Activated naive CD4-positive, alpha-beta T cell treated with anti-CD3 and anti-CD28 coated beads for 36 hours (primary cell): ENCODE measurements at regions of chr4 and their contacts with region 1.

Region 1: DNA sequence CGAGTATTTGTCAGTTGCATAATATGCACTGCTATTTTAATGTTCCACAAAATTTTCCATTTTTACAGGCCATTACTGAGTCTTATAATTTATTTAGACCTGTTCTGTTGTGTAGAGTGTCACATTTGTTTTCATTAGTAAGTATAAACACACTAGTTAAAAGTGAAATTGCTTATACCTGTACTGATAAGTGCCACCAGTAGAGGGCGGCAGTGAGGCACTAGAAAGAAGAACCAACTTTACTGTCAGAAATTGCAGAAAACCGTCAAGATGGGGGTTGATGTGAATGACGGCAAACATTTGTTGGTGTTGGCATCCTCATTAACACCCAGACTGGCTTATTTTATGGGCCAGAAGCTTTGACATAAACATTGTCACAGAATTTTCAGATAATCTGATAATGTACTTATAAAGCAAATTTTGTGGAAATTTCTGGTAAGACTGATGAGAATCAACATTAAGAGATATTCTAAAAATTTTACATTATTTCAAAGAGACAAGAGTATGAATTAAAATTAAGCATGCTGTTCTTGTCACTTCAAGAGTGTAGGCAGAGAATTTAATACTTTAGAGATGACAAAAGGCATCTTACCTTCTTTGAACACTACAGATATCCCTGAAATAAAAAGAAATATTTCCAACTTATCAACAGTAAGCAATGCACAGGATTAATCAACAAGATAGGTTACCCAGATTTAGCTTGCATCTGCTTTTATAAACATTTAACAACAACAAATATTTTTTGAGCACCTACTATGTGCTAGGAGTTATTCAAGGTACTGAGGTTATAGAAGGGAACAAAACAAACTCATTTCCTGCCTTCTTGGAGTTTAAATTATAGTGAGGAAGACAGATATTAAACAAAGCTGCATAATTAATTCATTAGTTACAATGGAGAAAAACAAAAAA is 24.9 kb downstream of the ALPK1 start:
- DNase-seq: peak; percentile 90
- H3K4me3 Mint-ChIP-seq: no peak overlapping the region
- H3K27ac Mint-ChIP-seq: no peak overlapping the region
- H3K4me1 Mint-ChIP-seq: peaks cover 19% of the 10 kb centered on the region
- H3K27me3 Mint-ChIP-seq: no peaks in the 10 kb centered on the region

Region 2: GRCh38 chr4:112214390-112215264 is 107.4 kb before region 1 on chr4:
- CTCF ChIA-PET with region 1: interaction called, 4 read pairs
- intact Hi-C with region 1: loop called (anchors 5 kb)
- DNase-seq: no peak
- H3K4me3 Mint-ChIP-seq: no peak overlapping the region
- H3K27ac Mint-ChIP-seq: no peak overlapping the region
- H3K4me1 Mint-ChIP-seq: peaks cover 14% of the 10 kb centered on the region
- H3K27me3 Mint-ChIP-seq: no peaks in the 10 kb centered on the region

Region 3: DNA sequence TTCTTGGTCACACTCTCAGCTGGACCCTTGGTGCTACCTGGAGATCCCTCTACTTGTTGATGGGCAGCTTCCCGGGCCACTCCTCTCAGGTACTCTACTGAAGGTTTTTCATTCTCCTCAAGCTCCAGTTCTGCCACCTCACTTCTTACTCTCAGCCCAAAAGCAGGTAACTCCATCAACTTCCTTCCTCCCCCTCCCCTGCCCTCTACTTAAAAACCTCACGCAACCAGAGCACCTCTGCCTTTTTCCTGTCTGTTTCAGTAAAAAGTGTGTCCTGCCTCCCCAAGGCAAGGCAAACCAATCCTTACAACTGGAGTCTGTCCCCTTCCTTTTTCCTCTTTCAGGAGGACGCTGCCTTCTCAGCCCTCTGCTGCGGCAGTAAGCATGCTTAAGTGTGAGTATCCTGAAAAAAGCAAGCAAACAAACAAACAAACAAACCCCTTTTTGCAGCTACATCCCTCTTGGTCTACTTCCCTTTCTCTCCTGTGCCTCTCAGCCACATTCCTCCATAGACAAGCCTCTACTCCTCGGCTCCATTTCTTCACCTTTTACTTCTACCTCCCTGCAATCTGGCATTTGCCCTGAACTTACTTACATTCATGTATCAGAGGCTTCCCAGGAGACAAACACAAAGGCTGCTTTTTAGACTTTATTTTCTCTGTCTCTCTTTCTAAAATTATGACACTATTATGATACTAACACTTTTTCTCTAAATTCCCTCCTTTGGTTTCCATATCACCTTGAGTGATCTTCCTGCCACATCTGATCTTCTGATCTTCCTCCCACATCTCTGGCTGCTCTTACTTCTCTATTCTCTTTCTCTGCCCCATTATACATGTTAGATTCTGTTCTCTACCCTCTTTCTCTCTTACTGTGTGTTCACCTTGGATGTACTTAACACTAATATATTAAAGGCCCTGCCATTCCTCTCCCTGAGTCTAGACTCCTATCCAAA is 19.4 kb before region 1 on chr4:
- CTCF ChIA-PET with region 1: interaction called, 4 read pairs
- intact Hi-C with region 1: loop called (anchors 1 kb)
- DNase-seq: peak; percentile 47
- H3K4me3 Mint-ChIP-seq: no peak overlapping the region
- H3K27ac Mint-ChIP-seq: no peak overlapping the region
- H3K4me1 Mint-ChIP-seq: peaks cover 21% of the 10 kb centered on the region
- H3K27me3 Mint-ChIP-seq: no peaks in the 10 kb centered on the region